ENCODE measurements at regions of chr6 and their contacts with region 1.

Region 1: DNA sequence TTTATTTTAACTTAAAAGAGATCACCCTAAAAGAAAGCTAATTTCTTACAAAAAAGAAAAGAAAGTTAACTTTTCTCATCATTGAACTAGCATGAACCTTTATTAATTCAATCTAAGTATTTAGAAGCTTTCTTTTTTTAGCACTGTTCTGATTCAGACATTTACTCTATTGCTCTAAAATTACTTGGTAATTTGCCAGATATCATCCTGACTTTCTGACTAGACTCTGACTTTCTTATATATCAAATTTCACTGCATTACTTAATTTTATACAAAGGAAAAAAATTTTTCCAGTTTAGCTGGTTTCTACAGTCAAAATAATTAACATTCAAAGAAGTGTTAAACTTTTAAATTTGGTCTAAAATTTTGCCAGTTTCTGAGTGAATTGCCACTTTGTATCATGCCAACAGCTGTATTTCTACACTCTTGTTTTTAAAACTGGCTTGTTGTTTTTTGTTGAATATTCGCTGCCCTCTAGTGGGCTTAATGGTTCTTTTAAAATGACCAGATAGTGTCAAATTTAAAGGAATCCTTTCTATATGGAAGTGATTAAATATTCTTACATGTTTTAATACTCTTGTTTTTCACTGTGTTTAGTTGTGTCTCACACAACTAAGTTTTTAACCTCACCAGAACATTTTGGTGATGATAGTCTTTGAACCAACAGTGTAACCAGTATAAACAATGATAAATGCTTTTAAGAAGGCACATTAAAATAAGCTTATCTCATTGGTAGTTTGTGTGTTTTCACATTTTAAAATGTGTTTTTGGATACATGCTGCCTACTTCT is 102.0 kb downstream of the POPDC3 start:
- DNase-seq: no peak
- H3K4me3 ChIP-seq: no peak overlapping the region
- H3K27ac ChIP-seq: no peak overlapping the region
- H3K4me1 ChIP-seq: no peaks in the 10 kb centered on the region
- H3K27me3 ChIP-seq: no peaks in the 10 kb centered on the region
- CTCF ChIP-seq: peak; percentile 23 to 63 (median 46)
- POLR2A ChIP-seq: no peak

Region 2: GRCh38 chr6:104789770-104790190 is 288.0 kb before region 1 on chr6:
- intact Hi-C with region 1: loop called in 1 of 2 experiments (anchors 5 kb)
- DNase-seq: no peak
- H3K4me3 ChIP-seq: no peak overlapping the region
- H3K27ac ChIP-seq: no peak overlapping the region
- H3K4me1 ChIP-seq: no peaks in the 10 kb centered on the region
- H3K27me3 ChIP-seq: no peaks in the 10 kb centered on the region
- CTCF ChIP-seq: peak; percentile 16 to 57 (median 34)
- POLR2A ChIP-seq: no peak

Region 3: DNA sequence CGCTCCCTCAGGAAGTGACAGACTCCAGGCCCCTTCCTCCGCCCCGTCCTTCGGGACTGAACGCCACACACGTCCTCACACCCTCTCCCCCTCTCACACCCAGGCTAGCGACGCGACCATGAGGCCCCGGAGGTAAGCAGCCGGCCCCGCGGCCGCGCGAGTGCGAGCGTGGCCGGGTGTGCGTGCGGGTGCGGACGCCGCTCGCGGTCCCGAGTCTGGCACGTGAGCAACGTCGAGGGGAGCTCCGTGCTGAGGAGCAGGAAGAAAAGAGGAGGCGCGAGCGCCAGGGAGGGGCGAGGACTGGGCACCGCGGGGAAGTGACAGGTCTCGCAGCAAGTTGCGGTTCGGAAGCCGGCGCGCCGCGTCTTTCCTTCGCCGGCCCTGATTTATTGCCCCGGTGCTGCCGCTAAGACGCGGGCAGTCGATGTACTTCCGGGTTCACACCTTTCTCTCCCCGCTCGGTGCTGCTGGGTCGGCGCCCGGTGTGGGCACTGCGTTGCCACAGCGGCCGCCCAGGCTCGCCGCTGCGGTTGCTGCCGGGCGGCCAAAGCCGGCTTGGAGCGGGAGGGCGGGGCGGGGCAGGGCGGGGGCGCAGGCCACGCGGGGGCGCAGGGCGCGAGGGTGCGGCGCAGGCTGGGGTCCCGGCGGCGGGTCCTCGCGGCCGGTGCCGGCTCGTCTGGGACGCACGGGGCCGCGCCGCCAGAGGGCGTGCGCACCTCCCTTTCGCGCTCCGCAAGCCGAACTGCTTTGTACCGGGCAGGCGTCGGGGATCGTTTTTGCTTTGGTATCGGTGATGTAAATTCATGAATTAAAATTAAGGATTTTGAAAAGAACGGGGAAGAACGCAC is 136.7 kb before region 1 on chr6:
- intact Hi-C with region 1: loop called in 1 of 2 experiments (anchors 10 kb)
- DNase-seq: peak in 5 of 7 donors; percentile 20 to 62 (median 31)
- H3K4me3 ChIP-seq: peak overlapping the region in 1 of 4 donors; percentile 52
- H3K27ac ChIP-seq: peak overlapping the region in 1 of 5 donors; percentile 24
- H3K4me1 ChIP-seq: peaks cover 0 to 4% of the 10 kb centered on the region in 2 donors
- H3K27me3 ChIP-seq: peaks cover 62% of the 10 kb centered on the region
- CTCF ChIP-seq: peak in 4 of 6 experiments; percentile 6 to 51 (median 32)
- POLR2A ChIP-seq: no peak

Measured in adrenal gland (tissue), 19 donors.